Head of caudate nucleus (tissue), 42 donors: ENCODE measurements at regions of chr10 and their contacts with region 1.

Region 1: DNA sequence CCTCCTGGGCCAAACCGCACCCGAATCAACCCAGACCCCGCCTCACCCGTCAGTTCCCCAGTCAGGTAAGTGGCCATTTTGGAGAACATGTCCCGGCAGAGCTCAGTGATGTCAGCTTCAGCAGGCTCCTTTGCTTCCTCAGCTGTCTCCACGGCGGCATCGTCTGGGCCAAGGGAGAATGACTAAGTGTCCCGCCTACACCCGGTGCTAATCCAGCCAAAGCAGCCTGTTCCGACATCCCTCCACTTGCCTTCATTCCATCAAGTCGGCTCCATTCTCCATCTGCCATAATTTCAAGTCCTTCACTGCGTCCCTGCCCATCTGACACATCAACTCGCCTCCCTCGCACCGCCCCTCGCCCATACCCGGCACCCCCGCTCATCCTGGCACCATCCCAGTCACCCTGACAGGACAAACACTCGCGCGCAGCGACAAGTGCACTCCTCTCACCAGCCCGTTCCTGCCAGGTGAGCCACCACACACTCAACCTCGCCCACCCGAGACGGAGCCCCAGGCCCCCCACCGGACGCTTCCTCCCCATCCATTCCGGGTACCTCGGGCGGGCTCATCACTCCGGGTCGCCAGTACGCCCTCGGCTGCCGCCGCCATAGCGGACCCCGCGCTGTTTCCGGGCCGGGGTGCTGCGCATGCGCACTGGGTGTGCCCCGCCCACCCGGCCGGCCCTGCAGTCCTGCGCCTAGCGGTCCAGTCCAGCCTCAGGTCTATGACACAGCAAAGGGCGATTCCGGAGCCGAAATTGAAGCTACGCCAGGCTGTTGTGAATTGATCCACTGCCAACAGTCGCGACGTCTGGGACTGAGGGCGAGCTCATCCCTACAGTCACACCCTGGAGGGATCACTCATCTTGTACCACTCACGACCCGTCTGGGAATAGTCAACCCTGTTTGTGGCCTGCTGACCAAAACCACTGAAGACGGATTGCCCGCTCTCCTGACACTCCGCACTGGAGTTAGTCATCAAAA is at the start of gene BLOC1S2:
- DNase-seq: peak; percentile 59 to 95 (median 89)

Region 2: DNA sequence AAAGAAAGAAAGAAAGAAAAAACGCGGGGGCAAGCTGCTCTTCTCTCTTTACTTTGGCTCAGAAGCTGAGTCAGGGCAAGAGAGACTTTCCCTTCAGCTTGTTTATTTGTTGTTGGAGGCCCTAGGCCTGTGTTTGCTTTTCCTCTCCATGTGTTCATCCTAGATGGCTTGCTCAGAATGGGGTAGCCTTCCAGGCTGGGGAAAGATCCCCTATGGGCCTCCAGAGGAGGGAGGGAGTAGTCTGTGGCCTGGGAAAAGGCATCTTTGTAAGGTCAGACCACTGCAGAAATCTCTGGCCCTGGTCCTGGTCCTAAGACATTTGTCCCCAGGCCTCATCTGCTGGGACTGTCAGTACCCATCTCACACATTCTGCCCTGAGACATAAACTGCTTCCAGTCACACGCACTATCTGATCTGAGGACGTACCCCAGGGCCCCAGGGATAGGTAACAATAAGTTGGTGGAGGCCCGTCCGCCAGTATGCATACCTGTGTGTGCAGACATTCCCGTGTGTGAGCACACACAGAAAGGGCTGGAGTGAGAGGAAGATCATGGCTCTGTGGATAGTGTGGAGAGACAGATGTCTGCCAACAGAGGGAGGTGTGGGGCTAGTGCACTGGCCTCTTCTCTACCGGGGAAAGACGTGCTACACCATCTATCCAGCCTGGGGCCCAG is 55.7 kb after region 1 on chr10:
- intact Hi-C with region 1: loop called (anchors 5 kb)
- DNase-seq: peak in 37 of 42 donors; percentile 23 to 83 (median 61)

Region 3: DNA sequence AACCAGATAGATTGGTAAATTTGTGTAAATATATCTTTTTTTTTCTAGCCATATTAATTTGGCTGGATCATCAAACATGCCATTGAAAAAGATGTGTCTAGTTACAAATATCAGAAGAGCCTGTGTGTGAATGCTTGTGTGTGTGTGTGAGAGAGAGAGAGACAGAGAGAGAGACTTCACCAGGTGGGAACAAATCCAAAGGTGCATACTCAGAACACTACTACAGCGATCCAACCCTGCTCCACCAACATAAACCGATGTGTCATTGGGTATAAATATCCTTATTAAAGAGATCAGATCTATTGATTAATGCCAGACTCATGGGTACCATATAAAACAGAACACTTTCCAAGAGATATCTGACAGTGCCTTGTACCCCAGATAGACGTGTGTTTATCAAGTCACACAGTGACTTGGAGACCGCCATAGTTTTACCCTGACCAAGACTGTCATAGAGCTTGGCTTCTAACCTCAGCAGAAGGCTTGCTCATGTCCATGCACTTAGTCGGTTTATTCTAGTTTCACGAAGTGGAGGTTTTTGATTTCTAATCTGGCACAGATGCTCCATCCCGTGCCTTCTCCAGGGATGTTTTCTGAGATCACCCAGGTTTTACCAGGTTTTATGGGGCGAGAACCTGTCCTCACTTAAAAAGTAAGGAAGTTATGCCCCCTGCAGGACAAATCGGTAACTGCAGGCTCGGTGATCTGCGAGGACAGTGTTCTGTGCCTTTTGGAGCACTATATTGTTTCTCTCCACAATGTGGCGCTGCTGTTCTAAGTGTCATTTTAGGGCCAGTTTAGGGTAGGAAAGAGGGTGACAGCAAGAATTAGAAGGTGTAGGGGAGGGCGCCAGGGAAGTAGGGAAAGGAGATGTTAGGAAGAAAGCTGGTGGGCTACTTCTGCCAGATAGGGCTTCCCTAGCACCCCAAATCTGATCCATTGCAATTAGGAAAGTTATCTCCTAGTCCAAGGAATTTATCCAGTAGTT is 147.2 kb after region 1 on chr10:
- intact Hi-C with region 1: loop called (anchors 1 kb)
- DNase-seq: peak; percentile 59 to 99 (median 96)

Region 4: DNA sequence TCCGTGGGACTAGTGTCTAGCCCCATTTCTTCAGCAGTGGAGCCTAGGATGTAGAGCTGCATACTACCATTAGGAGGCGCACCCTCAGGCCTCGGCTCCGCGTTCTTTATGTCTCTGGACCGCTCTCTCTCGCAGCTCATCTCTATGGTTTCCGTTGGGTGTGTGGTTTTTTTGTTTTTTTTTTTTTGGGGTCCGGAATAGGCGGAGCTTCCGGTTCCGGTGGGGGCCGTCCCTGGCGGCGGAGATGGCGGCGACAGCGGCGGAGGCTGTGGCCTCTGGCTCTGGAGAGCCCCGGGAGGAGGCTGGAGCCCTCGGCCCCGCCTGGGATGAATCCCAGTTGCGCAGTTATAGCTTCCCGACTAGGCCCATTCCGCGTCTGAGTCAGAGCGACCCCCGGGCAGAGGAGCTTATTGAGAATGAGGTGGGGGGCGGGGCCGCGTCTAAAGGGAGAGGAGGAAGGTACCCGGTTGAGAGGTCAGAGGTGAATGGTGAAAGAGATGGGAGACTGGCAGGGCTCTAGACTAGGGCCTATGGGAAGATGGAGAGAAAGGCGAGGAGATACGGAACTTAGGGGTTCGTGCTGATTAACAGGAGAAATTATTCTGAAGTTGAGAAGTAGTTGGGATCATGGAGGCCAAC is 249.5 kb after region 1 on chr10 and contains the start of gene HIF1AN:
- intact Hi-C with region 1: loop called (anchors 10 kb)
- DNase-seq: peak; percentile 77 to 96 (median 90)